RWPE1 (cell line): ENCODE measurements at regions of chr6 and their contacts with region 1.

Region 1: DNA sequence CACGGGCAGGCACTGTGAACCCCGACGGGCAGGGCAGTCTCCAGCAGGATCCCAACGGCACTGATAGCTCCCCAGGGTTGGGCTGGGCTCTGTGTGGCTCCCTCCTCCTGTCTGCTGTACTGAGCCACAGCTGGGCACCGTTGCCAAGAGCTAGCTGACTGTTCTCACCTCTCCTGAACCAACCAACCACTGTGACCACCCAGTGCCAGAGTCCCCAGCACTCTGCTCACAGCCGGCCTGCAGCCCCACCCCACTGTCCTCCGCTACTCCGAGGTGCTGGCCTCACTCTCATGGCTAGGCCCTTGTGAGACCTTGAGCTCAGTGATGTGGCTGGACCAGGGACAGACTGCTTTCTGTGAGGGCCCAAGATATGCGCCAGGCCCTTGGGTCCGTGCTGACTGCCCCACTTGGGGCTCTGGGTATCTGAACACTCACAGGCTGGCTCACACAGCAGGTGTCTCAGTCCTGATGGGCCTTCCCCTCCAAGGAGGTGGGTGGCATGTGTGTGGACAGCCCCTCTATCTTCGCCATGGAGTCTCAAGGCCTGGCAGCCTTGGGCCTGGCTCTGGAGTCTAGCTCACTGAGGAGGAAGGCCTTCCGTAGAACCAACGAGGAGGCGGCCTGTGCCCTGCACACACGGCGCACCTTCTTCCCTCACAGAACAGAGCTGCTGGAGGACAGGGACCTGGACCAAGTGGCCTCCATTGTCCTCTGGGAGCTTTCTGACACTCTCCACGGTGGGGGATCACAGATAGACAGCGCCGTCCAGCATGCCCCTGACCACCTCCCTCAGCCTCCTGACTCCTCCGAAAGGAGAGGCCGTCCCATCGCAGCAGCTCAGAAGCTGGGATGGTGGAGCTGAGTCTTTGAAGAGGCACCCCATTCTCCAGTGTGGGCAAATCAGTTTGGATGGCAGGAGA is 53.5 kb downstream of the TCP11 start:
- DNase-seq: no peak
- H3K27ac ChIP-seq: 0 out of 2 replicates have a peak overlapping the region, but pooled peaks have one; percentile 77
- CTCF ChIP-seq: no peak

Region 2: GRCh38 chr6:35305117-35305516 is 217.5 kb after region 1 on chr6:
- CTCF ChIA-PET with region 1: no interaction called
- POLR2A ChIA-PET with region 1: interaction called, 10 read pairs
- DNase-seq: no peak
- H3K27ac ChIP-seq: no peak overlapping the region
- CTCF ChIP-seq: no peak